Transverse colon (tissue), 4 donors: ENCODE measurements at regions of chr20 and their contacts with region 1.

Region 1: GRCh38 chr20:40945754-40946450 is 82.7 kb upstream of the TOP1 start:
- DNase-seq: peak; percentile 41
- H3K4me3 ChIP-seq: no peak overlapping the region
- H3K27ac ChIP-seq: no peak overlapping the region
- H3K4me1 ChIP-seq: no peaks in the 10 kb centered on the region
- H3K27me3 ChIP-seq: no peaks in the 10 kb centered on the region
- CTCF ChIP-seq: peak; percentile 23 to 41 (median 34)
- EP300 ChIP-seq: no peak
- POLR2A ChIP-seq: no peak

Region 2: GRCh38 chr20:39885975-39886649 is 1059.8 kb before region 1 on chr20:
- in situ Hi-C with region 1: loop called in 3 of 4 experiments (anchors 25 kb)
- intact Hi-C with region 1: no loop called
- DNase-seq: peak; percentile 47
- H3K4me3 ChIP-seq: no peak overlapping the region
- H3K27ac ChIP-seq: no peak overlapping the region
- H3K4me1 ChIP-seq: no peaks in the 10 kb centered on the region
- H3K27me3 ChIP-seq: no peaks in the 10 kb centered on the region
- CTCF ChIP-seq: peak; percentile 34 to 46 (median 35)
- EP300 ChIP-seq: no peak
- POLR2A ChIP-seq: no peak